Mammary epithelial cell (primary cell): ENCODE measurements at regions of chr2 and their contacts with region 1.

Region 1: DNA sequence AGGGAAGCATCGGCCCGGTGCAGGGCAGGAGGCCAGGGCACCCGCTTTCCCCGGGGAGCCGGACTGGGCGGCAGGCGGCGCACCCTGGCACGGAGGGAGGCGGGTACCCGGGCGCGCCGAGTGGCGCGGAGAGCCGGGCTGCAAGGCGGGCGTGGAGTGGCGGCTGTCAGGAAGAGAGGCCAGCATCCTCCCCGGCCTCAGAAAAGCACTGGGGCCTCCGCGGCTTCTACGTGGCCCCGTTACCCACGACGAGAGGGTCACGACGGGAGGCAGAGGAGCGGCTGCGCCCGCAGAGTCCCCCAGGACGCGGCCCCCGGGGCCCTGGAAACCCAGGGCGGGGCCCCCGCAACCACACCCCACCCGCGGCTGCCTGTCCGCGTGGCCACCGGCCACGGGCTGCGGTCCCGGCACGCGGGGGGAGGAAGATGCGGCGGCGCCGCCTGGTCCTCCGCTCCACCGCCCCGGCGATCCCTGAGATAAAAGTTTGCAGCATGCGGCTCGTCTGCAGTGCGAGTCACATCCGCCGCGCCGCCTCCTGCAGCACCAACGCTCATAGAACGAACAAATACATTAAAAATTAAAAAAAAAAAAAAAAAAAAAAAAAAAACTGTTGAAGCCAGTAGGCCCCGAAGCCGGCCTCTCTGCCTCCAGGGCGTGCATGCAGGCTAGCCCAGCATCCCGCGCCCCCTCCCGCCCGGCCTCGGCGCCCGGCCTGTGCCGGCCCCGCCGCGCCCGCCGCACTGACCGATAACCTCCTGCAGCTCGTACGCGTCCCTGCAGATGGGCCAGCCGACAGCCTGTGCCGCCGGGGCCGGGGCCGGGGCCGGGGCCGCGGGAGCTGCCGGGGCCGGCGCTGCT is 683 bp downstream of the STK39 start:
- DNase-seq: peak; percentile 51
- H3K4me3 ChIP-seq: peak overlapping the region; percentile 66 to 92 (median 78)
- H3K27ac ChIP-seq: peak overlapping the region; percentile 45
- H3K4me1 ChIP-seq: peaks cover 28% of the 10 kb centered on the region
- H3K27me3 ChIP-seq: no peaks in the 10 kb centered on the region
- CTCF ChIP-seq: peak; percentile 10 to 67

Region 2: GRCh38 chr2:168136392-168136977 is 110.2 kb before region 1 on chr2:
- CTCF ChIA-PET with region 1: no interaction called
- dilution Hi-C with region 1: no loop called
- in situ Hi-C with region 1: no loop called
- intact Hi-C with region 1: loop called (anchors 1 kb)
- DNase-seq: peak; percentile 36
- H3K4me3 ChIP-seq: no peak overlapping the region
- H3K27ac ChIP-seq: no peak overlapping the region
- H3K4me1 ChIP-seq: no peaks in the 10 kb centered on the region
- H3K27me3 ChIP-seq: no peaks in the 10 kb centered on the region
- CTCF ChIP-seq: peak; percentile 43 to 61

Region 3: GRCh38 chr2:168166902-168167510 is 79.7 kb before region 1 on chr2:
- CTCF ChIA-PET with region 1: no interaction called
- dilution Hi-C with region 1: no loop called
- in situ Hi-C with region 1: loop called in 1 of 2 experiments (anchors 5 kb)
- intact Hi-C with region 1: no loop called
- DNase-seq: peak; percentile 87
- H3K4me3 ChIP-seq: no peak overlapping the region
- H3K27ac ChIP-seq: no peak overlapping the region
- H3K4me1 ChIP-seq: peaks cover 13% of the 10 kb centered on the region
- H3K27me3 ChIP-seq: no peaks in the 10 kb centered on the region
- CTCF ChIP-seq: no peak

Region 4: DNA sequence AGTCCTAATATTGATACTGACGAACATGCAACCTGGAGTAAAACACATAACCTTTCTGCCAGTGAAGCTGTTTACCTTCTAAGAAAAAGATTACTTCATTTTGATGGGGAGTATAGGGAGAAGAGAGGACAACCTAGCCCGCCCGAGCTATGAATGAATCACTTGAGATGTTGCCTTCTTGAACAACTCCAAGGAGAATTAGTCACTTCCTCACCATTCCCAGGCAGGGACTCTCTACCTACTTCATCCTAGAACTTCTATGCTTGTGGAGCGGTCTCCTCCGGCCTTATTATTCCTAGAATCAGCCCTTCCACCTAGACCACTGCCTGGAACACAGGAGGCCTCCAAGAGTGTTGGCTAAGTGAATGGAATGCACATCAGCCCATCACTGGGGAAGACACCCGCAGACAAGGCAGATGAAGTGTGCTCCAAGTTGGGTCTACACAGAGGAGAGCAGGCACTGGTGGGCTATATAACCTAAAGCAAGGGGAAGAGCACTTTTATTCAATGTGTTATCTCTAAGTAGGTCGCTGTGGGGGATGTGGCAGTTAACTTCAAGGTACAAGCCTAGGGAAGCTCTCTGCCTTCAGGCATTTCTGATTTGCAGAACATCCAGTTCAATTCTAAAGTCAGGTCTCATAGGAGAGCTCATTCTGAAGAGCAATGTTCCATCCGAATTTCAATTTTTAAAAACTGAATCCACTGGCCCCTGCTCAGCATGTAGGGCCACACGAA is 56.7 kb before region 1 on chr2:
- CTCF ChIA-PET with region 1: interaction called, 34 read pairs
- dilution Hi-C with region 1: no loop called
- in situ Hi-C with region 1: no loop called
- intact Hi-C with region 1: no loop called
- DNase-seq: peak; percentile 83
- H3K4me3 ChIP-seq: no peak overlapping the region
- H3K27ac ChIP-seq: peak overlapping the region; percentile 4
- H3K4me1 ChIP-seq: peaks cover 42% of the 10 kb centered on the region
- H3K27me3 ChIP-seq: no peaks in the 10 kb centered on the region
- CTCF ChIP-seq: no peak

Region 5: DNA sequence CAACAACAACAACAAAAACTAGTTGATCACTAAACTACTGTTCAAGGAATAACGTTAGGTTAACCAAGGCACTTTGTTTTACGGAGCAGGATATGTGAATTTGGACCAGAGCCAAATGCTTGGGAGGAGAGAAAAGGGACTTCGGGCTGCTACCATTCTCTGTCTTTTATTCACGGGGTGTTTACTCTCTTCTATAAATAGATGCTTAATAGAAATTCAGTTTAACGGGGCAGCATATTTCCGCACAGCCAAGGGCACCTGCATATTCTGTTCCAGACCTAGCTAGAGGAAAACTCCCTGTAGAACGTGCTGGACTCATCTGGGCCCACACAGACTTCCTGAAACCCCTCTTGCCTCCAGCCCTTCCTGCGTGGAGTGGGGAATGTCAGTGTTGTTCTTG is 36.5 kb after region 1 on chr2:
- CTCF ChIA-PET with region 1: no interaction called
- dilution Hi-C with region 1: no loop called
- in situ Hi-C with region 1: no loop called
- intact Hi-C with region 1: no loop called
- DNase-seq: no peak
- H3K4me3 ChIP-seq: no peak overlapping the region
- H3K27ac ChIP-seq: no peak overlapping the region
- H3K4me1 ChIP-seq: no peaks in the 10 kb centered on the region
- H3K27me3 ChIP-seq: no peaks in the 10 kb centered on the region
- CTCF ChIP-seq: no peak

Region 6: GRCh38 chr2:168323529-168324021 is 76.9 kb after region 1 on chr2:
- CTCF ChIA-PET with region 1: no interaction called
- dilution Hi-C with region 1: no loop called
- in situ Hi-C with region 1: no loop called
- intact Hi-C with region 1: loop called (anchors 5 kb)
- DNase-seq: no peak
- H3K4me3 ChIP-seq: no peak overlapping the region
- H3K27ac ChIP-seq: no peak overlapping the region
- H3K4me1 ChIP-seq: peaks cover 5% of the 10 kb centered on the region
- H3K27me3 ChIP-seq: peaks cover 3% of the 10 kb centered on the region
- CTCF ChIP-seq: no peak

Region 7: DNA sequence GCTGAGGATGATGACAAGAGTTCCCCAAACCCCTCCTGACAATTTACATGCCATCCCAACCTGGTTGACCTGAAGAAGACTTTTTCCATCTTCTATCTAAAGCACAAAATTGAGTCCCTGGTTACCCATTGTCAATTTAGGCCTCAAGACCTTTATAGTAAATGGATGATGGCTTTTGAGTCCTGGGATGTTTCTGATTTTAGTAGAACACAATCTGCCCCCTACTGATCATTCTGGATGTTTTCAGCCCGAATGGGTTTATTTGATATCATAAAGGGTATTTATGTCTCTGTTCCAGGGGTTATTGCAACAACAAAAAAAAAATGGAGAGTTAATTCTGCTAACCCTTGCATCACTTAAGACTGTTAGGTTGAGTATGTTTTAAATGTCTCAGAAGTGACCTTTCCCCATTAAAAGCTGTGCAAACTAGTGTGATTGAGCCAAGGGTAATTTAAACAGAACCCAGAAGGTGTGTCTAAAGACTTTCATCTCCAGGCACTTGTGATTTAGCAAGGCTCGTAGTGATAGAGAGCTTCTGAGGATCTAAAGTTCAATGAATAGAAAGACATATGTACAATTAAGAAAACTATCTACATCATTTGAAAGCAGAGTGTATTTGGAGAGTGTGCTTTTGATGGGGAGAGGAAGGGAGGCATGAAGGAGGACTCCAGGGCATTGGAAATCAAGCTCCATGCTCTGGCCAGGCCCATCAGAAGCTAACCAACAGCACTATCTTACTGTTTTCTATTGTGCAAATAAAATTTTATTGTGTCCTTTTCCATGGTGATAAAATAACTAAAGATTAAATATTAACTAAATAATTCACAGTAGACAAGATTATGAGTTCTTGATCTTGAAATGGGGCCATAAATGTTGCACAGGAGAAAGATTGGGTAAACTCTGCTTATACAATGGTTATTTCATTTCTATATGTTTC is 459.1 kb after region 1 on chr2:
- CTCF ChIA-PET with region 1: no interaction called
- dilution Hi-C with region 1: no loop called
- in situ Hi-C with region 1: no loop called
- intact Hi-C with region 1: loop called (anchors 10 kb)
- DNase-seq: no peak
- H3K4me3 ChIP-seq: no peak overlapping the region
- H3K27ac ChIP-seq: no peak overlapping the region
- H3K4me1 ChIP-seq: peaks cover 11% of the 10 kb centered on the region
- H3K27me3 ChIP-seq: no peaks in the 10 kb centered on the region
- CTCF ChIP-seq: peak; percentile 23